Sciatic nerve (tissue), 2 donors: ENCODE measurements at regions of chr10 and their contacts with region 1.

Region 1: DNA sequence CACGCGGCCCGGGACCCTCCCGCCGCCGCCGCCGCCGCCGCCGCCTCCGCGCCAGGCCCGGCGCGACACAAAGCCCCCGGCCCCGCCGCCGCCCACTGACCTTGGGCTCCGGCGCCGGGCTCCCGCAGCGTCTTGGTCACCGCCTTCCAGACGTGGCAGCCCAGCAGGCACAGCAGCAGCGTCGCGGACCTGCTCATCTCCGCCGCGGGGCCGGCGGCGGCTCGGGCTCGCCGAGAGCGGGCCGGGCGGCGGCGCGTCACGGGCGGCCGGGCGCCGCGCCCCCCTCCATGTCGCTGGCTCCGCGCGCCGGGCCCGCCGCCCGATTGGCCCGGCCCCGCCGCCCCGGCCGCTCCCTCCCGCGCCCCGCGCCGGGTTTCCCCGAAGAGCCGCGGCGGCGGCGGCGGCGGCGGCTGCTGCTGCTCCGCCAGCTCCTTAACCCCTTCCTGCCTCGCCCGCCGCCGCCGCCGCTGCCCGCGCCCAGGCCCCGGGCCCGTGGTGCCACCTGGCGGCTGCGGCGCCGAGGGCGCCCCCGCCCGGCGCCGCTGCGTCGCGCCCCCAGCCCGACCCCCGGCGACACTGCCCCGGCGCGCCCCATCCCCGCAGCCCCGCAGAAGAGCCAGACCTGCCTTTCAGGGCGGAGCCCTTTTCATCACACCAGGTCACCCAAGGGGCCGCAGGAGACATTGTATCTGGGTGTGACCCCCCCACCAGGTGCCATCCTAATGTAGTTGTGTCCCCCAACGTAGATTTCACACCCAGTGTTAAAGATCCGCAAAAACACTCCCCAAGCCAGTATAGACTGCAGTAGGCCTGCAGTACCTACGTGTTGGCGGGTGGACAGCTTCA is at the start of gene FAM171A1:
- DNase-seq: peak; percentile 73
- ATAC-seq: peak; percentile 63
- total RNA-seq, gene FAM171A1: 32.6 TPM

Region 2: GRCh38 chr10:15209827-15210509 is 161.1 kb before region 1 on chr10:
- intact Hi-C with region 1: loop called (anchors 10 kb)
- DNase-seq: peak; percentile 92
- ATAC-seq: peak; percentile 91

Region 3: GRCh38 chr10:15310776-15311568 is 60.1 kb before region 1 on chr10:
- intact Hi-C with region 1: no loop called
- DNase-seq: no peak
- ATAC-seq: no peak